Activated CD8-positive, alpha-beta T cell treated with anti-CD3 and anti-CD28 coated beads, Interleukin-2, amount 10 ng/mL, durations not matched to agents 7 days and 5 days (primary cell): ENCODE measurements at regions of chr1 and their contacts with region 1.

Region 1: DNA sequence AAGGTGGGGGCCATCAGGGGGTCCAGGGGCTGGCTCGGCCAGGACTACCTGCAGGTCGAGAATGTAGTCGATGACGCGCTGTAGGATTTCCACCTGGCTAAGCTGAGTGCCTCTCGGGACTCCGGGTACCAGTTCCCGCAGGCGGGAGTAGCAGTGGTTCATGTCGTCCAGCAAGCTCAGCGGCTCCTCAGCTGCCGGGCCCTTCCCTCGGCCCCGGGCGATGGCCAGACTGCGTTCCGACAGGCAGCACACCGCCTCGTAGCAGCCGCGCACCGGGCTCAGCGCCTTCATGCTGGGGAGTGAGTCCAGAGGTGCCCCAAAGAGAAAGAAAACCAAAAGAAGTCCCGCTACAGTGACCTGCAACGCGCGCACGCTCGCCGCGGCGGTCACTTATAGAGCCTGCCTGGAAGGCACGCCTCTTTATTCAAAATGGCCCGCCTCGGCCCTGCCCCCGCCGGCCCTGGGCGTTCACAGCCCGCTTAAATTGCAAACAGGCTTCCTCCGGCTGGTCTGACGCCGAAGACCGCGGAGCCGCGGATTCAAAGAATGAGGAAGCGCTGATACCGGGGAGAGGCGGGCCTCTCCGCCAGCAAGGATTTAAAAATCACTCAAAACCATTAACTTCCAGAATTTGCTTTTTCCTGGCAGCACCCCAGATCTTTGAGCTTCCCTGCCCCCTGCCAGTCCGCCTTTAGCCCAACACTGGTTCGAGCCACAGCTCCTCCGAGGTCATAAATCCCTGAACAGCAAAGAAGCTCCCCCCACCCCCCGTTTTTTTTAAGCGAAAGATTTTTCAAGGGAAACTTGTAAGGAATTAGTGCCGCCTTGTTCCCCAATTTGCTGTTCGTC is at the start of gene ID3:
- DNase-seq: peak; percentile 97
- ATAC-seq: peak; percentile 74
- H3K4me3 Mint-ChIP-seq: peak within 1 kb of the TSS; percentile 95
- H3K27ac Mint-ChIP-seq: peak within 1 kb of the TSS; percentile 87
- H3K4me1 Mint-ChIP-seq: peaks cover 70% of the 10 kb centered on the region
- H3K27me3 Mint-ChIP-seq: peaks cover 34% of the 10 kb centered on the region
- total RNA-seq, gene ID3: 31.4 to 34.4 TPM

Region 2: DNA sequence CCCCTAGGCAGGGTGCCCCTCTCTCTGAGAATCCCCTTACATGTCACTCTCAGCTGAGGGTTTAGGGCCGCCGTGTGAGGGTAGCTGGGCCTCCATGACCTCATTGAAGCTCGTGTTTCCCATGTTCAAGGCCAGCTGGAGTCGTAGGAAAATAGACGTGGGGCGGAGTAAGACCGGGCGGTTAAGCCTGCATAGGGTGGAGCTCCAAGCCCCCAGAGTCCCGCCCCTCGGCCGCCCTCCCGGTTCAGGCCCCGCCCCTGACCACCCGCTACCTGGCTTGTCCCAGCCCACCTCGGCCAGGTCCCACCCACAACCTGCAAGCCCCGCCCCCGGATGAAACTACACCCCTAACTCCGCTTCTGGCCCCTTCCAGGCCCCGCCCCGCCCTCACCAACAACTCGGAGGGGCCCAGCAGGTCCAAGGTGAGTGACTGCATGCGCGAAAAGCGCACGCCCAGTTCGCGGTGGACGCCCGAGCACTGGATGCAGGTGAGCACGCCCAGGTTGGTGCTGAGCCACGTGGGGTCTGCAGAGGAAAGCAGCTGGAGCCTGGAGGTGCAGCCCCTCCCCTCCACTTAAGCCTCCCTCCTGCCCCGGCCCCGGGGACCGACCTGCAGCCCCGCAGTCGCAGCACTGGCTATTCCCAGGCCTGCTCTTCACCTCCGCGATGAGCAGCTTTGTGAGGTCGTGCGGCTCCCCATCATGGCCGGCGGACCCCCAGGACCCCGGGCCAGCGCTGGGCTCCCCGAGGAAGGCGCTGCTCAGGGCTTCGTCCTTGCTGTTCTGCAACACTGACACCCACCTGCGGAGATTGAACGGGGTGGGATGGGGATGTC is 122.6 kb before region 1 on chr1:
- CTCF ChIA-PET with region 1: no interaction called
- POLR2A ChIA-PET with region 1: no interaction called
- DNase-seq: peak; percentile 46
- ATAC-seq: peak; percentile 74
- H3K4me3 Mint-ChIP-seq: no peak overlapping the region
- H3K27ac Mint-ChIP-seq: no peak overlapping the region
- H3K4me1 Mint-ChIP-seq: no peaks in the 10 kb centered on the region
- H3K27me3 Mint-ChIP-seq: peaks cover 12% of the 10 kb centered on the region

Region 3: GRCh38 chr1:23530747-23531561 is 28.4 kb before region 1 on chr1 and contains the start of gene E2F2:
- CTCF ChIA-PET with region 1: interaction called, 10 read pairs
- POLR2A ChIA-PET with region 1: interaction called, 8 read pairs
- DNase-seq: peak; percentile 90
- ATAC-seq: peak; percentile 76
- H3K4me3 Mint-ChIP-seq: peak within 1 kb of the TSS; percentile 96
- H3K27ac Mint-ChIP-seq: peak within 1 kb of the TSS; percentile 94
- H3K4me1 Mint-ChIP-seq: peaks cover 61% of the 10 kb centered on the region
- H3K27me3 Mint-ChIP-seq: no peaks in the 10 kb centered on the region
- total RNA-seq, gene E2F2: 75.0 to 80.3 TPM

Region 4: GRCh38 chr1:23577056-23578004 is 18.0 kb after region 1 on chr1:
- CTCF ChIA-PET with region 1: interaction called, 63 read pairs
- POLR2A ChIA-PET with region 1: interaction called, 43 read pairs
- DNase-seq: peak; percentile 70
- ATAC-seq: peak; percentile 89
- H3K4me3 Mint-ChIP-seq: peak overlapping the region; percentile 48
- H3K27ac Mint-ChIP-seq: peak overlapping the region; percentile 90
- H3K4me1 Mint-ChIP-seq: peaks cover 65% of the 10 kb centered on the region
- H3K27me3 Mint-ChIP-seq: no peaks in the 10 kb centered on the region

Region 5: GRCh38 chr1:23591460-23592208 is 32.3 kb after region 1 on chr1:
- CTCF ChIA-PET with region 1: interaction called, 26 read pairs
- POLR2A ChIA-PET with region 1: interaction called, 69 read pairs
- DNase-seq: peak; percentile 70
- ATAC-seq: peak; percentile 76
- H3K4me3 Mint-ChIP-seq: peak overlapping the region; percentile 43
- H3K27ac Mint-ChIP-seq: peak overlapping the region; percentile 91
- H3K4me1 Mint-ChIP-seq: peaks cover 78% of the 10 kb centered on the region
- H3K27me3 Mint-ChIP-seq: no peaks in the 10 kb centered on the region

Region 6: DNA sequence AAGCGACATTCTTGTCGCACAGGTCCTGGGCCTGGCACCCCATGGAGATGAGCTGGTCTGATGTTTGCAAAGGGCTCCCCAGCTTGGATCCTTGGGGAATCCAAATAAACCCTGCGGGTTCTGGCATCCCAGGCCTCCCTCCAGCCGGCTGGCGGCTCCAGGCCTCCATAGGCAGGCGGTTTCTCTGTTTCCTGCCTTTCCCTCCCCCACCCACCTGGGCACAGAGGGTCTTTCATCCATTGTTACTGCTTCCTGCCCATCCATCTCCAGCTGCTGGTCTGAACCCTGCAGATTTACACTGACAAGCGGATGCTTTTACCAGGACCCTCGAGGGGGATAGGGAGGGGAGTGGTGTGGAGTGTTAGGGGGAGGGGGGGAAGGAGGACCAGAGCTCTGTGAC is 39.1 kb after region 1 on chr1:
- CTCF ChIA-PET with region 1: interaction called, 76 read pairs
- POLR2A ChIA-PET with region 1: interaction called, 69 read pairs
- DNase-seq: no peak
- ATAC-seq: no peak
- H3K4me3 Mint-ChIP-seq: no peak overlapping the region
- H3K27ac Mint-ChIP-seq: peak overlapping the region; percentile 51
- H3K4me1 Mint-ChIP-seq: peaks cover 93% of the 10 kb centered on the region
- H3K27me3 Mint-ChIP-seq: no peaks in the 10 kb centered on the region

Region 7: DNA sequence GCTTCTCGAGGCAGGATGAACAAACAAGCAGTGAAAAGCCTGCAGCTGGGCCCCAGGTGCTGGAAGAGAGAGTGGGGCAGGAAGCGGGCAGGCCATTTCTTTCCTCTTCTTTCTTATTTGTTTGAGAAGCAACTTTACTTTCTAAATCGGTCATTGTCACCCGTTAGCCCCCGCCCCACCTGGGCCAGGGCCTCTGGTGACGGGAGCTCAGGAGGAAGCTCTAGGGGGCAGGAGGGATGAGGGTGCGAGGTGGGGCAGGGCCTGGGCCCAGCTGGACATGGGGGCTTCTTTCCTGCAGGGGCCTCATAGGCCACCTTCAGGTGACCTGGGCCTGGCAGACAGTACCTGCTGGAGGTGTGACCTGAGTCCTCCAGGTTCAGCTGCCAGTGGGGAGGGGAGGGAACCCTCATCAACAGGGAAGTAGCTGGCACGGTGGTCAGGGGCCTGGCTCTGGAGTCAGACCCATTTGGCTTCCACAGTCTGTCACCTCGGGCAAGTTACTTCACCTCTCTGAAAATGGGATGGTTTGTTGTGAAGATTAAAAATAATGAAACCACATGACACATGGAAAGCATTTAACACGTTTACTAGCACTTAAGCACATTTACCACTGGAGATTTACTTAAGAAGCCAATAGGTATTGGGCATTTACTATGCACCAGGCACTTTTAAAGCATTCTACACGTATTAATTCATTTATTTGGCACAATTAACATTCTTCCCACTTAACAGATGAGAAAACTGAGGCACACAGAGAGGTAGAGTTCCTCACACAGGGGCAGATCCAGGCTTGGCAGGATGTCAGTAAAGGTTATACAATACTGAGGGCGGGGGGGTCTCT is 54.1 kb after region 1 on chr1:
- CTCF ChIA-PET with region 1: interaction called, 48 read pairs
- POLR2A ChIA-PET with region 1: interaction called, 32 read pairs
- DNase-seq: peak; percentile 73
- ATAC-seq: peak; percentile 66
- H3K4me3 Mint-ChIP-seq: peak overlapping the region; percentile 53
- H3K27ac Mint-ChIP-seq: peak overlapping the region; percentile 96
- H3K4me1 Mint-ChIP-seq: peaks cover 68% of the 10 kb centered on the region
- H3K27me3 Mint-ChIP-seq: no peaks in the 10 kb centered on the region

Region 8: DNA sequence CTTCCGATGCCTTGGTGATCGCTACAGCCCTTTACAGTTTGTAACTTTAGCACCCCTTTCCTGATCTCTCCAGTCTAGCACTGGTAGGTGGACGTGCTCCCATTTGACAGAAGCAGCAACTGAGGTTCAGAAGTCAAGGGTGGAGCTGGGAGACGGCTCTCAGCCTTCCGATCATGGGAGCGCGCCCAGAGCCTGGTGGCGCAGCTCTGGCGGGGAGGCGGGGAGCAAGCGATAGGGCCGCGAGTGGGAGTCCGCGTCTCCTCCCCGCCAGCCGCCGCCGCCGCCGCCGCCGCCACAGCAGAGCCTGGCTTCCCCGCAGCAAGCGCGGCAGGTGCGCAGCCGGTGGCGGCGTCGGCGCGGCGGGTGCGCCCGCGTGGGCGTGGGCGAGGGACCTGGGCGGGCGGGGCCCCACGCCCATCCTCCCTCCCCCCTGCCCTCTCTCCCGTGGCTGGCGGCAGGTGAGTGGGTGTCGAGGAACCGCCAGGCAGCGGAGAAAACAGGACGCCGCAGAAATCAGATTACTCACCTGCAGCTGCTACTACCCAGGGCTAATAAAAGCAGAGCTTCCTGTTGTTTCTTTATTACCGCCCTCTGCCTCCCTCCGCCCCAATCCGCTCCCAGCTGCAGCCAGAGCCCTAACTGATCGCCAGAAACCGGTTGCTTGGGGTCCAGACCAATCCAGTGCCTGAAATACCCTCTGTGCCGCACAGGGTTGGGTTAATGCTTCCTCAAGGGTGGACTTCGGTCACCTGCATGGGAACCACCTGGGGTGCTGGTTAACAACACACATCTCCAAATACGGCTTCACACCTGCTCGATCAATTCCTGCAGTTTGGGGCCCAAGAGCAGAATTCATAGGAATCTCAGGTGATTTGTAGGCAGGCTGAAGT is 60.2 kb after region 1 on chr1:
- CTCF ChIA-PET with region 1: interaction called, 1,062 read pairs
- POLR2A ChIA-PET with region 1: interaction called, 32 read pairs
- DNase-seq: peak; percentile 80
- ATAC-seq: peak; percentile 77
- H3K4me3 Mint-ChIP-seq: peak overlapping the region; percentile 75
- H3K27ac Mint-ChIP-seq: peak overlapping the region; percentile 81
- H3K4me1 Mint-ChIP-seq: peaks cover 72% of the 10 kb centered on the region
- H3K27me3 Mint-ChIP-seq: no peaks in the 10 kb centered on the region

Region 9: GRCh38 chr1:23657659-23658275 is 98.4 kb after region 1 on chr1:
- CTCF ChIA-PET with region 1: no interaction called
- POLR2A ChIA-PET with region 1: no interaction called
- DNase-seq: peak; percentile 60
- ATAC-seq: peak; percentile 88
- H3K4me3 Mint-ChIP-seq: no peak overlapping the region
- H3K27ac Mint-ChIP-seq: no peak overlapping the region
- H3K4me1 Mint-ChIP-seq: no peaks in the 10 kb centered on the region
- H3K27me3 Mint-ChIP-seq: peaks cover 5% of the 10 kb centered on the region